ENCODE measurements at regions of chr2 and their contacts with region 1.

Region 1: DNA sequence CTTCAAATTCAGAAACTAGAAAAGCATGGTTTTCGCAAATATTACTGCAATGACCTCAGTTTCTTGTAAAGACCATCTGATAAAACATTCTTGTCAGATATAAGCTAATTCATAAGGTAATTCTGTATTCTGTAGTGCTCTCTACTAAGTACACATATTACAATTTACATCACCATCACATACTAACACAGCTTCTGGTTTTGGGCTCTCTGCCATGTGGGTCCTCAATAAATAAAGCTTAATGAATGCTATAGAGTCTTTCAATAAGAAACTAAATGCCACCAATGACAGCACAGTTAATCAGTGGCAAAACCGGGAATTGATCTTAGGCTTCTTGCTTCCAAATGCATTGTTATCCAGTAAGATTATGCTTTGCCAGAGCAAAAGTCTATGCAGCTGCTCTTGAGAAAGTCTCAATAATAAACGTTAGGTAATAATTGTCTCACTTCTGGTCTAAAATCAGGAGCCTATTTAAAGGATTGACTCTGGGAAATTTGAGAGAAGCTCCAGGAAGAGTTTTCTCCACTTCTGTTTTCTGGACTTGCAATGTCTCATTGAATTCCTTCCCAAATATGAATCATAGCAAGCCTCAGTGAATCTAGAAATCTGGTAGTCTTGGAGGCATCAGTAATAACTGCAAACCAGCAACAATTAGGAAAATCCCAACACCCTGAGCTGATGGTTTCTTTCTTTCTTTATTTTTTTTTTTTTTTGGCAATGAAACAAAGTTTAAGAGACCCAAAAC is 67.9 kb upstream of the RAPGEF4 start:
- DNase-seq: no peak
- H3K4me3 ChIP-seq: no peak overlapping the region
- H3K27ac ChIP-seq: no peak overlapping the region
- H3K4me1 ChIP-seq: peaks cover 14% of the 10 kb centered on the region
- H3K27me3 ChIP-seq: no peaks in the 10 kb centered on the region
- CTCF ChIP-seq: no peak

Region 2: GRCh38 chr2:172613040-172613439 is 54.7 kb before region 1 on chr2:
- CTCF ChIA-PET with region 1: no interaction called
- dilution Hi-C with region 1: loop called (anchors 5 kb)
- in situ Hi-C with region 1: no loop called
- intact Hi-C with region 1: no loop called
- DNase-seq: no peak
- H3K4me3 ChIP-seq: no peak overlapping the region
- H3K27ac ChIP-seq: no peak overlapping the region
- H3K4me1 ChIP-seq: no peaks in the 10 kb centered on the region
- H3K27me3 ChIP-seq: no peaks in the 10 kb centered on the region
- CTCF ChIP-seq: no peak

Region 3: DNA sequence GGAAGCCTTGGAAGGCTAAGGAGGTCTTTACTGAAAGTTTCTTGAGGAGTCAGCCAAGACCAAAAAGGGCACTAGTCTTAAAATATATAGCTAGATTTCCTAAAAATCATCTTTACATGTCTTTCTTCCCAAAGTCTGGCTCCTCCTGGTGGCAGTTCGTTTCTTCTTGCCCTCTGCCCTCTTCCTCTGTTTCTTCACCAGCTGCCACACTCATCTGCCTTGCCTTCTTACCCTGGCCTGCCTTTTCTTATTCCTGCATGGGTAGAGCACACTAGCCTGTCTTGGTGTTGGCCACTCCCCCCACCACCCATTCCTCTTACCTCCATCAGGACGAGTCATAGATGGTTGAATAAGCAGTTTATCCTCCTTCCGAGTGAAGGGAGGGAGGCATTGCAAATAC is 197.7 kb after region 1 on chr2:
- CTCF ChIA-PET with region 1: no interaction called
- dilution Hi-C with region 1: no loop called
- in situ Hi-C with region 1: no loop called
- intact Hi-C with region 1: no loop called
- DNase-seq: no peak
- H3K4me3 ChIP-seq: no peak overlapping the region
- H3K27ac ChIP-seq: no peak overlapping the region
- H3K4me1 ChIP-seq: no peaks in the 10 kb centered on the region
- H3K27me3 ChIP-seq: no peaks in the 10 kb centered on the region
- CTCF ChIP-seq: peak; percentile 44 to 45